ENCODE measurements at regions of chr9 and their contacts with region 1.

Region 1: GRCh38 chr9:99819856-99820684 is 1.6 kb upstream of the NR4A3 start:
- DNase-seq: no peak
- ATAC-seq: peak; percentile 53
- H3K4me3 Mint-ChIP-seq: peak overlapping the region; percentile 96
- H3K27ac Mint-ChIP-seq: peak overlapping the region; percentile 97
- H3K4me1 Mint-ChIP-seq: peaks cover 42% of the 10 kb centered on the region
- H3K27me3 Mint-ChIP-seq: no peaks in the 10 kb centered on the region
- CTCF ChIP-seq: no peak

Region 2: DNA sequence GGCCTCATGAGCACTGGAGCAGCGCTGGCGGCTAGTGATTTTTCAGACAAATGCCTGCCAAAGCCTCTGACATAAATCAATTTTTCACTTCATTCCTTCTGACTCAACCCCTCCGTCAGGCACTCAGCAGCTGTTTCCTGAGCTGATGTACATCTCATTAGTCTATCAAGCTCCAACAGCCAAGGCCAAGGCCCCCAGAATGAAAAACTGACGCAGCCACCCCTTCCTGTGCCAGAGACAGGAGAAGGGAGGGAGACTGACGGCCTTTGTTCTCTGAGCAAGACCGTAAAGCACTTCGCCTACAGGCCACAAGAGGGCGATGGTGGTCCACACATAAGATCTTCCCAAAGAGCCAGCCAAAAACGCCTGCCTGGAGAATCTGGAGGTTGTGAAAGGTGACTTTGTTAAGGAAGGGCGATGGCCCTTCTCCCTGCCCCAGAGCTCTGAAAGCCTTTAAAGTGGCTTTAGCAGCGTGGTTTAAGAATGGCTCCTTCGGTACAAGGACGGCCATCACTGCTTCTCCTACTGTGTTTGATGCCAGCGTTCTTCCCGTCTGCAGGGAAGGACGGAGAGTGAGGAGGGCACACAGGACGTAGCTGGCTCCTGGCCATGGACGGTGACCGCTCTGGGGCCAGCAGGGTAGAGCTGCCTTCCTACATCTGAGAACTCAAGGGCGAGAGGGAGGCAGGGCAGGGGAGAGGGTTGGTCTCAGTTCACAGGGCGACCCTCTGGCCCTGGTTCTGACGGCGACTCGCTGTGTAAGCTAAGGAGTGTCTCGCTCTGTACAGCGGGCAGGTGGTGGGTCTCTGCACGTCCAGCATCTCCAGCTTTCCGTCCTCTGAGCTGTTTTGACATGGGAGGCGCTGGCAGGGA is 635.4 kb before region 1 on chr9:
- CTCF ChIA-PET with region 1: interaction called, 15 read pairs
- POLR2A ChIA-PET with region 1: interaction called, 110 read pairs
- intact Hi-C with region 1: loop called (anchors 1 kb)
- DNase-seq: peak; percentile 76
- ATAC-seq: peak; percentile 80
- H3K4me3 Mint-ChIP-seq: peak overlapping the region; percentile 57
- H3K27ac Mint-ChIP-seq: peak overlapping the region; percentile 95
- H3K4me1 Mint-ChIP-seq: peaks cover 98% of the 10 kb centered on the region
- H3K27me3 Mint-ChIP-seq: no peaks in the 10 kb centered on the region
- CTCF ChIP-seq: peak; percentile 81

Region 3: GRCh38 chr9:99266255-99267023 is 553.6 kb before region 1 on chr9:
- CTCF ChIA-PET with region 1: interaction called, 10 read pairs
- POLR2A ChIA-PET with region 1: interaction called, 8 read pairs
- intact Hi-C with region 1: loop called (anchors 1 kb)
- DNase-seq: peak; percentile 71
- ATAC-seq: peak; percentile 74
- H3K4me3 Mint-ChIP-seq: peak overlapping the region; percentile 67
- H3K27ac Mint-ChIP-seq: peak overlapping the region; percentile 85
- H3K4me1 Mint-ChIP-seq: peaks cover 49% of the 10 kb centered on the region
- H3K27me3 Mint-ChIP-seq: no peaks in the 10 kb centered on the region
- CTCF ChIP-seq: no peak

Region 4: DNA sequence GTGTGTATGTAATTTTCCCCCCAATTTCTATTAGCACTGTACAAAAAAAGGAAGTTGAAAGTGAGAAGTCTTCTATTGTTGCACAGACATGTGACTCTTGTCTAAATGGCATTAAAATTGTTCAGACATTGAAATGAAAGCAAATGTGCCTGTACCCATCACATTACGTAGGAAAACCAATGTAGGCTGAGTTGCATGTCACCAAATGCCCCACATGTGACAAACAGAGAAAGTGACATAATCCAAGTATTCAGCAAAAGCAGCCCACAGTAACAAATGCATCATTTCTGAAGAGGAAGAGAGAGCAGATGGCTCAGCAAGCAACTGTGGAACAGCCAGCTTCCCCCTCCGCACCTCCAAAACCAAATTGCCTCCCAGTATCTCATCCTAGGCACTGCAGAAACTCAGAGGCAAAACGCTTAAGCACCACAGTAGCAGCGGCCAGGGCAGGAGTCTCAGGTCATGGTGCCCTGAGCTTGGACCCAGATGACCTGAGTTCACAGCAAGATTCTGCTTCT is 159.8 kb before region 1 on chr9:
- CTCF ChIA-PET with region 1: no interaction called
- POLR2A ChIA-PET with region 1: interaction called, 5 read pairs
- intact Hi-C with region 1: loop called (anchors 1 kb)
- DNase-seq: peak; percentile 30
- ATAC-seq: peak; percentile 91
- H3K4me3 Mint-ChIP-seq: peak overlapping the region; percentile 21
- H3K27ac Mint-ChIP-seq: peak overlapping the region; percentile 92
- H3K4me1 Mint-ChIP-seq: peaks cover 31% of the 10 kb centered on the region
- H3K27me3 Mint-ChIP-seq: no peaks in the 10 kb centered on the region
- CTCF ChIP-seq: no peak

Region 5: GRCh38 chr9:99889121-99889520 is 69.1 kb after region 1 on chr9:
- CTCF ChIA-PET with region 1: no interaction called
- POLR2A ChIA-PET with region 1: no interaction called
- intact Hi-C with region 1: no loop called
- DNase-seq: no peak
- ATAC-seq: no peak
- H3K4me3 Mint-ChIP-seq: no peak overlapping the region
- H3K27ac Mint-ChIP-seq: no peak overlapping the region
- H3K4me1 Mint-ChIP-seq: no peaks in the 10 kb centered on the region
- H3K27me3 Mint-ChIP-seq: no peaks in the 10 kb centered on the region
- CTCF ChIP-seq: no peak

Region 6: GRCh38 chr9:100058699-100059579 is 238.9 kb after region 1 on chr9:
- CTCF ChIA-PET with region 1: no interaction called
- POLR2A ChIA-PET with region 1: no interaction called
- intact Hi-C with region 1: loop called (anchors 1 kb)
- DNase-seq: no peak
- ATAC-seq: peak; percentile 77
- H3K4me3 Mint-ChIP-seq: peak overlapping the region; percentile 67
- H3K27ac Mint-ChIP-seq: peak overlapping the region; percentile 72
- H3K4me1 Mint-ChIP-seq: peaks cover 51% of the 10 kb centered on the region
- H3K27me3 Mint-ChIP-seq: no peaks in the 10 kb centered on the region
- CTCF ChIP-seq: no peak

Region 7: DNA sequence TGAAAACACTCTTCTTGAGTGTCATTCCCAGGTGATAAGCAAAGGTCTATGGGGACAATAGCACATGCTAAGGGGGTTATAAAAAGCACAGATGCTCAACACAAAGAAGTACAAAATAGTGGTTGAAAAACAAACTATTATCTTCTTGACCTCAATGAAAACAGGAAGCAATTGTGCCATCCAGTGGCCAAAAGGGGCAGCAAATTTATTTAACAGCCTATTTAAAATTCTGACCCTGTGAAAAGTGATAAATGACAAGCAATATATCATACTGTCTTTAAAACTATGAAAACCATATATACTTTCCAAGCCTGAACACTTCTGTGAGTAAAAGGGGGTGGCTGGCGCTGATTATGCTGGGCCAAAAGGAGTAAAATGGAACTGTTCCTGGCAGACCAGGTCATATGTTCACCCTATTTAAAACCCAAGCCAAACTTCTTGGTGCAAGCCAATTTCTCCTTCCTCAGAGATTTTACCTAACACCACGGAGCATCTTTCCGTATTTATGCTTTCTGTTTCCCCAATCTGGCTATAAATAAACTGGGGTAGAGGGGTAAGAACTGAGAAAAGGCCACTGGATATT is 503.0 kb after region 1 on chr9:
- CTCF ChIA-PET with region 1: interaction called, 4 read pairs
- POLR2A ChIA-PET with region 1: no interaction called
- intact Hi-C with region 1: loop called (anchors 5 kb)
- DNase-seq: no peak
- ATAC-seq: no peak
- H3K4me3 Mint-ChIP-seq: no peak overlapping the region
- H3K27ac Mint-ChIP-seq: no peak overlapping the region
- H3K4me1 Mint-ChIP-seq: peaks cover 2% of the 10 kb centered on the region
- H3K27me3 Mint-ChIP-seq: no peaks in the 10 kb centered on the region
- CTCF ChIP-seq: no peak

Region 8: GRCh38 chr9:101398068-101398929 is 1578.2 kb after region 1 on chr9 and contains the starts of genes MRPL50 and ZNF189:
- CTCF ChIA-PET with region 1: no interaction called
- POLR2A ChIA-PET with region 1: no interaction called
- intact Hi-C with region 1: loop called (anchors 5 kb)
- DNase-seq: peak; percentile 82
- ATAC-seq: peak; percentile 94
- H3K4me3 Mint-ChIP-seq: peak within 1 kb of the TSS; percentile 97
- H3K27ac Mint-ChIP-seq: peak within 1 kb of the TSS; percentile 98
- H3K4me1 Mint-ChIP-seq: peaks cover 74% of the 10 kb centered on the region
- H3K27me3 Mint-ChIP-seq: no peaks in the 10 kb centered on the region
- CTCF ChIP-seq: no peak
- total RNA-seq, gene MRPL50: 14.0 and 16.1 TPM in 2 replicates
- total RNA-seq, gene ZNF189: 16.1 and 21.1 TPM in 2 replicates